Tibial artery (tissue), 4 donors: ENCODE measurements at regions of chr20 and their contacts with region 1.

Region 1: DNA sequence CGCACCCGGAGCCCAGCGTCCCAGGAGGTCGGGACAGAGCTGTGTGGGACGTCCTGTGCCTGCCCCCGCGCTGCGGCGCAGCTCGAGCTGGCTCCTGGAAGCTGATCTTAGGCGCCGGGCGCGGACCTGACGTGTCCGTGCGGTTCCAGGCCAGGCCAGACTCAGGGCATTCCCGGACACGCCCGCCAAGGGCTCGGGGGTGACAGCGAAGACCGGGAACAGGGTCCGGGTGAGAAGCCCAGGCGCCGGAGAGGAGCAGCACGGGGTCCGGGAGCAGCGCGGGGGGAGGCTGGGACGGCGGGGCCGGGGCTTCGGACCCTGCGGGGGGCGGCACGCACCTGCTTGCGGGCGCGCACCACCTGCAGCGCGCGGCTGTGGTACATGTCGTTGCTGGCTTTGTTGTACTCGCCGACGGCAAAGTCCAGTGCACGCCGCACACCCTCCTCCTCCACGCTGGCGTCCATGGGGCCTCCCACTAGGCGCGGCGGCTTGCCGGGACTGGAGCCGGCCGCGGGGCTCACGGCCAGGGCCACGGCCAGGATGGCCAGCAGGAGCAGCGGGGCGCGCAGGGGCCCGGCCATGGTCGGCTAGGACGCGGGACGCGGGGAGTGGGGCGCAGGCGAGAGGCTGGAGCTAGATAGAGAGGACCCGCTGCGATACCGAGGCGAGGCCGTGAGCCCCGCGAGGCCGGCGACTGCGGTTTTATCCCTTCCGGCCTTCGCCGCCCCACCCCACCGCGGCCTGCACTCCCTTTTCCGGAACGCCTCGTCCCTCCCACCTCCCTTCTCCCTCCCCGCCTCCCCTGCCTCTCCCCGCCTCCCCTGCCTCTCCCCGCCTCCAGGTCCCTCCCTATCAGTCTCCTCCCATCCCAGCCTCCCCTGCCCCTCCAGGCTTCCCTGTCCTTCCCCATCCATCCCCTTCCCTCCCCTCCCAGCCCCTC is at the start of gene CST3:
- DNase-seq: peak; percentile 92 to 96
- H3K4me3 ChIP-seq: peak within 1 kb of the TSS; percentile 100
- H3K27ac ChIP-seq: peak within 1 kb of the TSS; percentile 98 to 100
- H3K4me1 ChIP-seq: peaks cover 0 to 39% (median 24%) of the 10 kb centered on the region in 4 donors
- H3K27me3 ChIP-seq: no peaks in the 10 kb centered on the region
- CTCF ChIP-seq: no peak

Region 2: GRCh38 chr20:23420943-23421931 is 216.3 kb before region 1 on chr20 and contains the start of gene NAPB:
- intact Hi-C with region 1: loop called (anchors 10 kb)
- DNase-seq: peak; percentile 94 to 95
- H3K4me3 ChIP-seq: peak within 1 kb of the TSS; percentile 100
- H3K27ac ChIP-seq: peak within 1 kb of the TSS; percentile 94 to 98
- H3K4me1 ChIP-seq: peaks cover 0 to 15% (median 9%) of the 10 kb centered on the region in 4 donors
- H3K27me3 ChIP-seq: no peaks in the 10 kb centered on the region
- CTCF ChIP-seq: peak; percentile 75 to 85

Region 3: GRCh38 chr20:23550232-23550631 is 87.3 kb before region 1 on chr20:
- intact Hi-C with region 1: no loop called
- DNase-seq: no peak
- H3K4me3 ChIP-seq: no peak overlapping the region
- H3K27ac ChIP-seq: no peak overlapping the region
- H3K4me1 ChIP-seq: no peaks in the 10 kb centered on the region
- H3K27me3 ChIP-seq: no peaks in the 10 kb centered on the region
- CTCF ChIP-seq: no peak

Region 4: GRCh38 chr20:23702021-23702420 is 64.5 kb after region 1 on chr20:
- intact Hi-C with region 1: no loop called
- DNase-seq: no peak
- H3K4me3 ChIP-seq: no peak overlapping the region
- H3K27ac ChIP-seq: no peak overlapping the region
- H3K4me1 ChIP-seq: no peaks in the 10 kb centered on the region
- H3K27me3 ChIP-seq: peaks cover 0 to 10% of the 10 kb centered on the region in 2 donors
- CTCF ChIP-seq: no peak